ENCODE measurements at regions of chr7 and their contacts with region 1.

Region 1: DNA sequence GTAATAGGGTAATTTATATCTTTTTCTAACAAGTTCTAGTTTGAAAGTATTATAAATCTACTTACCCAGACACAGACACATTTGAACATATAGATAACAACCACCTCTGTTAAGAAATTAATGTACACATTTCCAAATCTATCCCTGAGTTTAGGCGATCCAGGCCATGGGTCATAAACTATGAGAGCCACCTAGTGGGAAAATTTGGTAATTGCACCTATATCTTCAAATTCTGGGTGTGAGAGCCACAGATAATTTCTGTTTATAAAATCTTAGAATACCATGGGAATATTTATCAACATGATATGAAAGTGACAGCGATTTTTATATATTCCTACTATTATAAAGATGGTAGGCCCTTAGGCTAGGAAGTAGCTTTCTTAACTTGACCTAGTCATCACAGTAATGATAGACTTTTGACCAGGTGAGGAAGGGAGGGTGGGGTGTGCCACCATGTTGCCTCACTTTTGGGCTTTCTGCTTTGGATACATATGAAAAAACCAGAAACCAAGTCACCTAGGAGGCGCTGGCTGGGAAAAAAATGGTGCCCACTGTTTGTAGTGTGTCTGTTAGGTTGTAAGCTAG is 8.0 kb upstream of the EPHA1 start:
- DNase-seq: no peak
- ATAC-seq: peak; percentile 78
- H3K4me3 ChIP-seq: no peak overlapping the region
- H3K27ac ChIP-seq: no peak overlapping the region
- H3K4me1 ChIP-seq: no peaks in the 10 kb centered on the region
- H3K27me3 ChIP-seq: no peaks in the 10 kb centered on the region

Region 2: DNA sequence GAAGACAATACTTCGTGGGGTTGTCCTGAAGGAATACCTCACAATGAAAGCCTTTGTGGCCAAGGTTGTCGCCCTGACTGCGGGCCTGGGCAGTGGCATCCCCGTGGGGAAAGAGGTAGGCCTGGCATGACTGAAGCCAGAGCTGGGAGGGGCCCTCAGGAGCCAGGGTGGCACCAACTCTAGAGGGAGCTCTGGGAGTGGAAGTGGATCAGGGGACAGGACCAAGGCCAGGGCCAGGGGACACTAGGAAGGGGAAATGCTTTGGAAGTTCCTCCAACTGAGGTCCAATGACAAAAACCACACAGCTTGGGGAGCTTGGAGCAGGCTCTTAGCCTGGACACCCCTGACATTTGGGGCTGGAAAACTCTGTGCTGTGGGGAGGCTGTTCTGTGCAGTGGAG is 94.9 kb before region 1 on chr7:
- intact Hi-C with region 1: loop called in 1 of 2 experiments (anchors 5 kb)
- DNase-seq: peak in 1 of 2 donors; percentile 64
- ATAC-seq: no peak
- H3K4me3 ChIP-seq: no peak overlapping the region
- H3K27ac ChIP-seq: no peak overlapping the region
- H3K4me1 ChIP-seq: no peaks in the 10 kb centered on the region
- H3K27me3 ChIP-seq: no peaks in the 10 kb centered on the region

Region 3: DNA sequence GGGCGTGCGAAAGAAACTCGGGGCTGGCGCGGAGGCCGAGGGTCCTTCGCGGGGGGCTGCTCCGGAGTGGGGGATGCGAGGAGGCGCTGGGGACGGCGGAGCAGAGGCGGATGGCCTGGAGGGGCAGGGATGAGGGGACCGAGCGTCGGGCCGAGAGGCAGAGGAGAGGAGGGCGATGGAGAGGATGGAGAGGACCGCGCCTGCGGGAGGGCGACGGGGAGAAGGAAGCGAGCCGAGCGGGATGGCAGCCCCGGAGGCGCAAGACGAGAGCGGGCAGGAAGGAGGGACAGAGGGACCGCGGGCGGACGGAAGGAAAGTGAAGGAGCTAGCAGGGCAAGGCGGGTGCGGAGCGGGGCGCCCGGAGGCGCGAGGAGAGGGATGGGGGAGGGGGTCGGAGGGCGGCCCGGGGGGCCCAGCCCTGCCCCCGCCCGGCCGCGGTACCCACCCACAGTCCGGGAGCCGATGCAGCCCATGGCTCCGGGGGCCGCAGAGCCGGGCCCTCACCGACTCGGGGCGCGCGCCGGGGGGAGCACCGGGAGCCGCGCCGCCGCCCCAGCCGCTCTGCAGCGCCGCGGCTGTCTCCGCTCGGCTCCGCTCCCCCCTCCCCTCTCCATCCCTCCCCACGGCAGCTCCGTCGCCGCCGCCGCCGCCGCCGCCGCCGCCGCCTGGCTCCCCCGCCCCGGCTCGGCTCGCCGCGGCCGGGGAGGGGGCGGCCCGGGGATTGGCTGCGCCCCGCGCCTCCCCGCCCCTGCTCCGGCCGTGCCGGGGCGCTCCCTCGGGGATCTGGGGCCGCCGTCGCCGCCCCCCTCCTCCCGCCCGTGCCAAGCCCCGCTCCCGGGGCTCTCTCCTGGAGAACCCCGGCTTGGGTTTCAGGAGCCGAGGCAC is 54.3 kb before region 1 on chr7 and contains the start of gene FAM131B:
- intact Hi-C with region 1: loop called in 1 of 2 experiments (anchors 5 kb)
- DNase-seq: peak in 1 of 2 donors; percentile 81
- ATAC-seq: peak; percentile 39
- H3K4me3 ChIP-seq: peak within 1 kb of the TSS; percentile 62 to 66
- H3K27ac ChIP-seq: no peak within 1 kb of the TSS
- H3K4me1 ChIP-seq: no peaks in the 10 kb centered on the region
- H3K27me3 ChIP-seq: no peaks in the 10 kb centered on the region
- total RNA-seq, gene FAM131B: 2.8 to 3.8 TPM

Region 4: GRCh38 chr7:143733876-143734275 is 317.2 kb after region 1 on chr7:
- intact Hi-C with region 1: no loop called
- DNase-seq: no peak
- ATAC-seq: no peak
- H3K4me3 ChIP-seq: no peak overlapping the region
- H3K27ac ChIP-seq: no peak overlapping the region
- H3K4me1 ChIP-seq: no peaks in the 10 kb centered on the region
- H3K27me3 ChIP-seq: no peaks in the 10 kb centered on the region

Measured in aorta (tissue), 5 donors.